CD8-positive, alpha-beta T cell (primary cell): ENCODE measurements at regions of chr10 and their contacts with region 1.

Region 1: GRCh38 chr10:100969187-100970075 is at the start of gene SEMA4G:
- DNase-seq: peak in 8 of 9 experiments; percentile 19 to 71 (median 52)
- ATAC-seq: peak; percentile 68
- H3K4me3 ChIP-seq: peak within 1 kb of the TSS; percentile 29 to 56
- H3K4me3 Mint-ChIP-seq: peak within 1 kb of the TSS; percentile 74
- H3K27ac ChIP-seq: no peak within 1 kb of the TSS
- H3K27ac Mint-ChIP-seq: no peak within 1 kb of the TSS
- H3K4me1 ChIP-seq: peaks cover 13% of the 10 kb centered on the region
- H3K4me1 Mint-ChIP-seq: peaks cover 15% of the 10 kb centered on the region
- H3K27me3 ChIP-seq: no peaks in the 10 kb centered on the region
- H3K27me3 Mint-ChIP-seq: no peaks in the 10 kb centered on the region
- CTCF ChIP-seq: peak; percentile 58
- total RNA-seq, gene SEMA4G: 0.35 to 0.61 TPM

Region 2: DNA sequence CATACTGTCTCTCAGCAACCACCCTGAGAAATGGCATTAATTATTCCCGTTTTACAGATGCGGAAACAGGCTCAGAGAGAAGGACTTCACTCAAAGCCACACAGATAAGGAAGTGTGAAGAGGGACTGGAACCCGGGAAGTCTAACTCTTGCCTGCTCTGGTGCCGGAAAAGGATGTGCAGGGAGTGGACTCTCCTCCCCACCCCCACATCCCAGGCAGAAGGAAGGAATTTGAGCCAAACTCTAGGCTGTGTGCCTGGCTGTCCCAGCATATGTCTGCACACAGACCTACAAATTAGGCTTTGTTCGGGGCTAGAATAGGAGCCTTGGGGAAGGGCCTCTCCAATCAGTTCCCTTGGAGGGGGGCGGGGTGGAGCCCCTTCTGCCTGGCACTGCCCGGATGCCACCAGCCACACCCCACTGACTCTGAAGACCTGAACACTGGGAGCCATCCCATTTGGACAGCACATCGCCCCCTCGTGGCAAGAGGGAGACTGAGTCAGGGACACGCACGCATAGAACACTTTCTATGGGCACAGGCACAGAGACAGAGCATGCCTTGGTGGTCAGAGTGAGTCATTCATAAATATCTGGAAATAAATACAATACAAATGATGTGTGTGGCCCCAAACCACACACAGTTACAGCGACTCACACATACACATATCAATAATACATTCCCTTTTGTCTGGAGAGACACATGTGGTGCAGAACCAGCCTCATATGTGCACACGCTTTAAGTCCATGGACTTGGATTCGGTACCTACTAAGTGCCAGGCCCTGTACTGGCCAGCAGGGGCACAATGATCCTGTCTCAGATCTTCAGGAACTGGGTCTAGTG is 43.3 kb after region 1 on chr10:
- CTCF ChIA-PET with region 1: interaction called, 54 read pairs
- POLR2A ChIA-PET with region 1: interaction called, 3 read pairs
- intact Hi-C with region 1: loop called (anchors 1 kb)
- DNase-seq: peak; percentile 41 to 85 (median 78)
- ATAC-seq: peak; percentile 86
- H3K4me3 ChIP-seq: no peak overlapping the region
- H3K4me3 Mint-ChIP-seq: no peak overlapping the region
- H3K27ac ChIP-seq: no peak overlapping the region
- H3K27ac Mint-ChIP-seq: no peak overlapping the region
- H3K4me1 ChIP-seq: peaks cover 6% of the 10 kb centered on the region
- H3K4me1 Mint-ChIP-seq: peaks cover 13% of the 10 kb centered on the region
- H3K27me3 ChIP-seq: peaks cover 13 to 16% of the 10 kb centered on the region in 2 experiments
- H3K27me3 Mint-ChIP-seq: peaks cover 33% of the 10 kb centered on the region
- CTCF ChIP-seq: peak; percentile 83